OCI-LY7 (cell line): ENCODE measurements at regions of chr1 and their contacts with region 1.

Region 1: GRCh38 chr1:202144402-202145067 is at the start of gene ARL8A:
- DNase-seq: peak; percentile 73
- H3K4me3 ChIP-seq: peak within 1 kb of the TSS; percentile 85
- H3K27ac ChIP-seq: peak within 1 kb of the TSS; percentile 71
- H3K4me1 ChIP-seq: peaks cover 17% of the 10 kb centered on the region
- CTCF ChIP-seq: no peak
- total RNA-seq, gene ARL8A: 25.1 and 25.7 TPM in 2 replicates

Region 2: GRCh38 chr1:202160377-202160940 is 15.9 kb after region 1 on chr1 and contains the start of gene PTPN7:
- CTCF ChIA-PET with region 1: interaction called, 6 read pairs
- POLR2A ChIA-PET with region 1: interaction called, 11 read pairs
- intact Hi-C with region 1: no loop called
- DNase-seq: peak; percentile 69
- H3K4me3 ChIP-seq: peak within 1 kb of the TSS; percentile 73
- H3K27ac ChIP-seq: peak within 1 kb of the TSS; percentile 89
- H3K4me1 ChIP-seq: peaks cover 98% of the 10 kb centered on the region
- CTCF ChIP-seq: peak; percentile 63
- total RNA-seq, gene PTPN7: 54.2 and 67.5 TPM in 2 replicates